Activated CD4-positive, alpha-beta T cell treated with anti-CD3 and anti-CD28 coated beads, Interleukin-2, amount 10 ng/mL, durations not matched to agents 24 days and 14 days (primary cell): ENCODE measurements at regions of chr9 and their contacts with region 1.

Region 1: DNA sequence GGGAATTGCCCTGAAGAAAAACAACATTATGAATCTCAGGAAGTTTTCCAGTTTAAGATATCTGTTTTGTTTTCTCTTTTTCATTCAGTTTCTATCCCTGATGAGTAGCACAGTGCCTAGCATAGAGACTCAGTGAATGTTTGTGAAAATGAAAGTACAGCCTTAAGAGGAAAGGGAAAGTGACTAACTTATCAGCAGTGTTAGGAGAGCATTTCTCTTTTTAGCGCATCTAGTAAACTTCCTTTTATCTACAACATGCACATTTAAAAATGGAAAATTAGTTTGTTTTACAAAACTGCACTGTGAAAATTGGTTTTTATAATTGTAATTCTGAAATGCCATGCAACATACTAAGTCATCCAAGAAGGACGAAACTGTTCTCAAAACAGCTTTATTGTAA is 110.8 kb downstream of the SMARCA2 start:
- DNase-seq: no peak
- H3K4me3 Mint-ChIP-seq: peak overlapping the region; percentile 51
- H3K27ac Mint-ChIP-seq: peak overlapping the region; percentile 70
- H3K4me1 Mint-ChIP-seq: peaks cover 18% of the 10 kb centered on the region
- H3K27me3 Mint-ChIP-seq: no peaks in the 10 kb centered on the region

Region 2: GRCh38 chr9:2153630-2154217 is 27.8 kb after region 1 on chr9:
- intact Hi-C with region 1: no loop called
- DNase-seq: no peak
- H3K4me3 Mint-ChIP-seq: no peak overlapping the region
- H3K27ac Mint-ChIP-seq: no peak overlapping the region
- H3K4me1 Mint-ChIP-seq: peaks cover 23% of the 10 kb centered on the region
- H3K27me3 Mint-ChIP-seq: no peaks in the 10 kb centered on the region

Region 3: GRCh38 chr9:2849941-2850340 is 724.0 kb after region 1 on chr9:
- intact Hi-C with region 1: loop called (anchors 10 kb)
- DNase-seq: no peak
- H3K4me3 Mint-ChIP-seq: no peak overlapping the region
- H3K27ac Mint-ChIP-seq: peak overlapping the region; percentile 12
- H3K4me1 Mint-ChIP-seq: peaks cover 7% of the 10 kb centered on the region
- H3K27me3 Mint-ChIP-seq: peaks cover 6% of the 10 kb centered on the region